ENCODE measurements at regions of chr3 and their contacts with region 1.

Region 1: DNA sequence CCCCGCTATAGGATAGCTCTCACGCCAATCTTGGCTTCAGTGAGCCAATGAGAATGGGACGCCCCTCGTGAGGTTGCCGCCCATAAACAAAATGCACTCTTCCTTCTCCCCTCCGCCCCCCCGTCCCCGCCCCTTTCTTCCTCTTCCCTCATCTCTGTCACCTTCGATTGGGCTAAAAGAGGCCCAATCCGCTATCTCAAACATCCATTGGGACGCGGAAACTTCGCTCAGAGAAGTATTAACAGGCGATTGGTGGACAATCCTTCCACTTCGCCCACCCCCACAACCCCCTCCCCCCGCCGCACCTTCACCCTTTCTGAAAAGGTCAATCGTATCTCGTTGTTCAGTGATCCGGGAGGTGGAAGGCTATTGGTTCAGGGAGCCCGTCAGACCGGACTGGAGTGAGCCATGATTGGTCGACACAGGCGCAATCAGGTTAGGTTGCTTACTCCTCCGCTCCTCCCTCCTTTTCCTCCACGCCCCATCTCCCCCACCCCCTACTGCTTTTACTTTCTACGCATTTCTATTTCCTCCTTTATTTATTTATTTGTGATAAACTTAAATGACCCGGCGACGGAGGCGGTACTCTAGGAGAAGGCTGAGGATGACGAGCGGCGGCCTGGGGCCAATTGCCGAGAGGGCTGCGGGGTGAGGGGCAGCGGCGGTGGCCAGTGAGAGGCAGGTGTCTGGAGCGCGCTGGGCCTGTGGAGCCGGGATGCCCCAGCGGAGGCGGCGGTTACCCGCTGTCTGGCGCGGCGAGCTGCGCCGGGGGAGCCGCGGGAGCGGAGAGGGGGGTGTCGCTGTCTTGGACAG is 447 bp upstream of the ZBTB20 start:
- DNase-seq: peak; percentile 100
- H3K4me3 ChIP-seq: peak overlapping the region; percentile 81 to 96 (median 93)
- H3K27ac ChIP-seq: peak overlapping the region; percentile 97
- H3K4me1 ChIP-seq: peaks cover 6% of the 10 kb centered on the region
- H3K27me3 ChIP-seq: no peaks in the 10 kb centered on the region
- CTCF ChIP-seq: no peak
- POLR2A ChIP-seq: peak; percentile 60

Region 2: GRCh38 chr3:113745273-113746068 is 1402.1 kb before region 1 on chr3:
- CTCF ChIA-PET with region 1: no interaction called
- POLR2A ChIA-PET with region 1: no interaction called
- dilution Hi-C with region 1: no loop called
- intact Hi-C with region 1: loop called (anchors 5 kb)
- DNase-seq: peak; percentile 93
- H3K4me3 ChIP-seq: peak overlapping the region; percentile 93 to 95 (median 95)
- H3K27ac ChIP-seq: peak overlapping the region; percentile 99
- H3K4me1 ChIP-seq: peaks cover 38% of the 10 kb centered on the region
- H3K27me3 ChIP-seq: no peaks in the 10 kb centered on the region
- CTCF ChIP-seq: peak; percentile 53 to 63
- POLR2A ChIP-seq: no peak

Region 3: DNA sequence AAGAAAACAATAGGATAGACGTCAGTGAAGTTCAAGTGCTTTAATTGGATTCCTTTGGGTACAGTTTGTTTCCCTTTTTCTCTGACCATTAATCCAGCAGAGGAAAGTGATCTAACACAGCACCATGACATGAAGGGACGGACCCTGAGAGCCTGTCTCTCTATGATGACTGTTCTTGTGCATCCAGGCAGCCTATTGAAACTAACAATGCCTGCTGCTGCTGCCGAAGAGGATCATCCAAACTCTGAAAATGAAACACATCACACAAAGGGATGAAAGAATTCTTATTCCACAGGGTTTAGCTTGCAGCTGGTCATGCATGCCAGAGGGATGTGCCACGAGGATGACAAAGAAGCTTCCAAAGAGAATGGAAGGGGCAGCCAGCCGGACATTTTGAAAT is 75.9 kb before region 1 on chr3:
- CTCF ChIA-PET with region 1: no interaction called
- POLR2A ChIA-PET with region 1: interaction called, 3 read pairs
- dilution Hi-C with region 1: no loop called
- intact Hi-C with region 1: loop called (anchors 1 kb)
- DNase-seq: peak; percentile 82
- H3K4me3 ChIP-seq: no peak overlapping the region
- H3K27ac ChIP-seq: peak overlapping the region; percentile 35
- H3K4me1 ChIP-seq: peaks cover 35% of the 10 kb centered on the region
- H3K27me3 ChIP-seq: no peaks in the 10 kb centered on the region
- CTCF ChIP-seq: no peak
- POLR2A ChIP-seq: no peak

Region 4: DNA sequence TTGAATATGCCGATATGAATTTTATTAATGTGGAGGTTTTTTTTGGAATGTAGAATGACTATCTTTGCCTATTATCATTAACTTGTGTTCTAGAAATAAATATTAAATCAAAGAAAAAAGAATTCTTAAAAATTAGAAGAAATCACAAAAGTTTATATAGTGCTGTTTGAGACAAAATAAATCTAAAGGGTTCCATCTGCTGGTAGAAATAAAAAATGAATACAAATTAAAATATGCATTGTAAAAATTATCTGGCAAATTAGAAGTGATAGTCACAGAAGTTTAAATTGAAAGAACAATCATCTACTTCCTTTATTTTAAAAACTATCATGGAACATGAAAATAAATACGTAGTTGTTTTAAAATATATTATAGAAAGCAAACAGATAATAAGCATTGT is 22.3 kb after region 1 on chr3:
- CTCF ChIA-PET with region 1: interaction called, 7 read pairs
- POLR2A ChIA-PET with region 1: interaction called, 4 read pairs
- dilution Hi-C with region 1: no loop called
- intact Hi-C with region 1: loop called (anchors 1 kb)
- DNase-seq: no peak
- H3K4me3 ChIP-seq: no peak overlapping the region
- H3K27ac ChIP-seq: no peak overlapping the region
- H3K4me1 ChIP-seq: no peaks in the 10 kb centered on the region
- H3K27me3 ChIP-seq: no peaks in the 10 kb centered on the region
- CTCF ChIP-seq: no peak
- POLR2A ChIP-seq: no peak

Region 5: DNA sequence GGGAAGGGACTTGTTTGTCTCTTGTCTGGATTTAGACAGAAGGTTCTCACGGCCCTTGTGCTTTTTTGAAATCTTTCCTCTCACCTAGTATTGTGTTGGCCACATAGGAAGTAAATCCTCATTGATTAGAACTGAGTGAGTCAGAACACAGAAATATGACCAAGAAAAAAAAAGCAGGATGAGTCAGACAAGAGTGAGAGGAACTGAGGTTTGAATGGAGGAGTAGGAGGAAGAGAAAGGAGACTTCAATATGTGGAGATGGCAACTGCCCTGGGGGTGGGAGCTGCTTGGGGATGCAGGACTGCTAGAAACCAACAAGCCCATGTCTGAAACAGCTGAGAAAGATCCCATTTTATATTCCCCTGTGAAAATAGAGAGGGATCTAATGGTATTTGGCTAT is 193.7 kb after region 1 on chr3:
- CTCF ChIA-PET with region 1: no interaction called
- POLR2A ChIA-PET with region 1: no interaction called
- dilution Hi-C with region 1: no loop called
- intact Hi-C with region 1: loop called (anchors 5 kb)
- DNase-seq: peak; percentile 78
- H3K4me3 ChIP-seq: no peak overlapping the region
- H3K27ac ChIP-seq: peak overlapping the region; percentile 8
- H3K4me1 ChIP-seq: peaks cover 8% of the 10 kb centered on the region
- H3K27me3 ChIP-seq: no peaks in the 10 kb centered on the region
- CTCF ChIP-seq: no peak
- POLR2A ChIP-seq: no peak

Region 6: GRCh38 chr3:115692887-115693524 is 545.5 kb after region 1 on chr3:
- CTCF ChIA-PET with region 1: interaction called, 4 read pairs
- POLR2A ChIA-PET with region 1: no interaction called
- dilution Hi-C with region 1: no loop called
- intact Hi-C with region 1: loop called (anchors 1 kb)
- DNase-seq: peak; percentile 72
- H3K4me3 ChIP-seq: no peak overlapping the region
- H3K27ac ChIP-seq: no peak overlapping the region
- H3K4me1 ChIP-seq: no peaks in the 10 kb centered on the region
- H3K27me3 ChIP-seq: no peaks in the 10 kb centered on the region
- CTCF ChIP-seq: peak; percentile 75 to 77
- POLR2A ChIP-seq: no peak

Region 7: GRCh38 chr3:115727135-115727534 is 579.6 kb after region 1 on chr3:
- CTCF ChIA-PET with region 1: no interaction called
- POLR2A ChIA-PET with region 1: no interaction called
- dilution Hi-C with region 1: no loop called
- intact Hi-C with region 1: no loop called
- DNase-seq: no peak
- H3K4me3 ChIP-seq: no peak overlapping the region
- H3K27ac ChIP-seq: no peak overlapping the region
- H3K4me1 ChIP-seq: no peaks in the 10 kb centered on the region
- H3K27me3 ChIP-seq: no peaks in the 10 kb centered on the region
- CTCF ChIP-seq: no peak
- POLR2A ChIP-seq: no peak

Region 8: DNA sequence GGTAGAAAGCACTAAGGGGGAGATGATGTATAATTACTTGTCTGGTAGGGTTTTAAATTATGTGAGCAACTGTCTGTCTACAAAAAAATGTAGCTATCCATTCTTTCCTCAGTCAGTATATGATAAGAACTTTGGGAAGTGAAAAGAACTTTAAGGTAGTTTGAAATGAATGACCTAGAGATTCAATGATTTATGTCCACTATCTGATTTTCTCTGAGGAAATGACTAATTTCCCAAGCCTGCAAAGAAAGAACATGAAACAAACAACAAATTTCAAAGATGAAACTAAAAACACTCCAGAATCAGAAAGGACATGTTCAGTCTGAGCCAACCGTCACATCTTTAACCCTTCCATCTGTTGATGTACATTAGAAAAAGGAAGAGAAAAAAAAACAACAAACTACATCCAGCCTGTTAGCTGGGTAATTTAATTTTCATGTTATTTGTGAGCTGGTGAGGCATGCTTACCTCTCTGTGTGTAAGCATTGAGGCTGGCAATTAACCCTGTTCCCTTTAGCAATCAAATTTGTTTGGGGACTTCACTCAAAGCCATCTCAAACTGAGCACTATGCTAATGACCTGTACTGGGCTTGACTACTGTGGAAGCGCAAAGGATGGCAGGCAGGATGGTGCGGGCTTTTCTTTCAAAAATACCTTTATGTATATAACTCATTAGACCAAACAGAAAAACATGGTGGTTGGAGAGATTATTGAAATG is 1782.1 kb after region 1 on chr3:
- CTCF ChIA-PET with region 1: no interaction called
- POLR2A ChIA-PET with region 1: no interaction called
- dilution Hi-C with region 1: no loop called
- intact Hi-C with region 1: loop called (anchors 2 kb)
- DNase-seq: peak; percentile 76
- H3K4me3 ChIP-seq: peak overlapping the region in 1 of 3 experiments; percentile 38
- H3K27ac ChIP-seq: peak overlapping the region; percentile 93
- H3K4me1 ChIP-seq: peaks cover 26% of the 10 kb centered on the region
- H3K27me3 ChIP-seq: no peaks in the 10 kb centered on the region
- CTCF ChIP-seq: no peak
- POLR2A ChIP-seq: no peak

Measured in endothelial cell of umbilical vein (primary cell).